Naive thymus-derived CD4-positive, alpha-beta T cell (primary cell): ENCODE measurements at regions of chr3 and their contacts with region 1.

Region 1: DNA sequence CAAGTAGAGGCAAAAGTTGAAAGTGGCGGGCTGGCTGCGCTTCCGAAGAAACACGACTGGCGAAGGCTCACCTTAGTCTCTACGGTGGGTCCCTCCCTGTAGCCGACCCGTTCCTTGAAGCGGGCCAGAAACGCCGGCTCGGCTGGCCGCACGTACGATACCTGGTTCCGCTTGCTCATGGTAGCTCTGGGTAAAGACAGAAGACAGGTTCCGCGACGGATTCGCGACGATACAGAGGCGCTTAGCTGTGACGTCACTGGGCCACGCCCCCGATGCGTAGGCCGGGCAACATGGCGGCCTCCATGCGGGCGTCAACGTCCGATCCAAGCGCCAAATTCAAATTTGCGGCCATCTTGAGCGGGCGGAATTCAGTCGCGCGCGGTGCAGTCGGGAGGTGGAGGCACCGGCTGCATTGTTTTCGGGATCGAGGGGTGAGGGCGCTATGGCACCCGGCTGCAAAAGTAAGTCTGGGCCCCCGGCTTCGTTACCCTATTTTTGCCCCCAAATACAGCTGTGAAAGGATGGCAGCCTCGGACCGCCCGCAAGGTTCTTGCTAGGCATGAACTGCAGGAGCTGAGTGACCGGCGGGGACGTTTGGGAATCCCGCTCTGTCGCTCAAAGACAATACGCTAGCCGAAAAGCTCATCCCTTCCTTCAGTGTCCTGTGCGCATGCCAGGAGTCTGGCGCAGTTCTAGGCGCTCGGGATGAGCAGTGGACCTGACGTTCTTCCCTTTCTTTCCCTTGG is at the starts of genes KIAA1143 and KIF15:
- DNase-seq: peak; percentile 92 to 98 (median 94)
- ATAC-seq: peak; percentile 100
- H3K4me3 ChIP-seq: peak within 1 kb of the TSS; percentile 99
- H3K4me3 Mint-ChIP-seq: peak within 1 kb of the TSS; percentile 86 to 94 (median 90)
- H3K27ac ChIP-seq: peak within 1 kb of the TSS; percentile 82
- H3K27ac Mint-ChIP-seq: peak within 1 kb of the TSS; percentile 80 to 96 (median 92)
- H3K4me1 ChIP-seq: peaks cover 0 to 6% of the 10 kb centered on the region in 2 donors
- H3K4me1 Mint-ChIP-seq: peaks cover 16 to 51% (median 42%) of the 10 kb centered on the region in 7 donors
- H3K27me3 ChIP-seq: no peaks in the 10 kb centered on the region
- H3K27me3 Mint-ChIP-seq: peaks cover 0 to 3% (median 0%) of the 10 kb centered on the region in 5 donors
- total RNA-seq, gene KIAA1143: 17.5 to 44.4 (median 39.8) TPM
- total RNA-seq, gene KIF15: 0.11 to 31.9 (median 0.30) TPM

Region 2: DNA sequence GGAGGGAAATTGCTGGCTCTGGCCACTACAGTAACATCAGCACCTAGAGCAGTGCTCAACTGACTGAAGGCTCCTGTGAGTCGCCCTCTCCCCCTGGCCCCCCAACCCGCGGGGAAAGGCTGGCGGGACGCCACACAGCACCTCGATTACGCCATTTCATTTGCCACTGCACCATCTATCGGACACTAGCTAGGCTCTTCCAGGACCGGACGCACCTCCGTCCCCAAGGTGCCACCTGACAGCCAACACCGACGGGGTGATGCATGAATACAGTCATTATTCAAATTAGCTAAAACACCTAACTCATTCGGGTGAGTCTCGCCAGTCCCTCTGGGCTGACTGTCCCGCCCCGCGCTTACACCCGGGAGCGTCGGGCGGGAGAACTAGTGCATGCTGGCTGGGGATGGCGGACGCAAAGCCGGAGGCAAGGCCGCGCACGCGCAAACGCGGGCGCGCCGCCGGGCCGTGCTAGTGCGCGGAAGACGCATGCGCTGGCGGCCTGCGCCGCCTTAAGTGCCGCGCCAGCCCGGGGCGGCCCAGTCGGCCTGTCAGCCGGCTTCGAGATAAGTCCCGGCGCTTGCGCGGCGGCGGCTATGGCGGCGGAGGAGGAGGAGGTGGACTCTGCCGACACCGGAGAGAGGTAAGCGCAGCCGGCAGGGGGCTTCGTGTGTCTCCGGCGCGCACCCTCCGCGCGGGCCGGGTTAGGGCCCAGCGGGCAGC is 1071.0 kb before region 1 on chr3 and contains the start of gene ABHD5:
- CTCF ChIA-PET with region 1: no interaction called
- POLR2A ChIA-PET with region 1: no interaction called
- intact Hi-C with region 1: loop called in 1 of 2 experiments (anchors 5 kb)
- DNase-seq: peak; percentile 94 to 99 (median 96)
- ATAC-seq: peak; percentile 96
- H3K4me3 ChIP-seq: peak within 1 kb of the TSS; percentile 74
- H3K4me3 Mint-ChIP-seq: peak within 1 kb of the TSS; percentile 91 to 98 (median 94)
- H3K27ac ChIP-seq: peak within 1 kb of the TSS; percentile 85
- H3K27ac Mint-ChIP-seq: peak within 1 kb of the TSS; percentile 90 to 97 (median 92)
- H3K4me1 ChIP-seq: peaks cover 8% of the 10 kb centered on the region in 2 donors
- H3K4me1 Mint-ChIP-seq: peaks cover 11 to 47% (median 37%) of the 10 kb centered on the region in 7 donors
- H3K27me3 ChIP-seq: no peaks in the 10 kb centered on the region
- H3K27me3 Mint-ChIP-seq: peaks cover 0 to 6% (median 0%) of the 10 kb centered on the region in 5 donors
- total RNA-seq, gene ABHD5: 6.1 to 21.0 (median 12.1) TPM

Region 3: DNA sequence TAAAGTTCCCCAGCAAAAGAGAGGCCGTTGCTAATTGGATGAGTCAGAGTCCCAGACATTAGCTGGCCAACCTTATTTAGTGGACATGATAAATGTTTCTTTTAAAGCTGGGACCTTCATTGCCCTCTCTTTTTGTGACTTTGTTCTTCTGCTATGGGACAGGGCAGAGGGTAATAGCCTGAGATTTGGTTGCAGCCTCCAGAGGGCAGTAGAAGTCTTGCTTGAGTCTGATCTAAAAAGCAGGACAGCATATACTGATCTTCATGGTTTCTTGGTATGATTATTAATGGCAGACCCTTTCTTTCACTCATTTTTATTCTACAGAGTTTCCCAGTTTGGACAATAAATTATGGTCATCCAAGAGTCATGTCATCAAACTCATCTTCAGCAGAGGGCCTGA is 231.7 kb before region 1 on chr3:
- CTCF ChIA-PET with region 1: interaction called, 4 read pairs
- POLR2A ChIA-PET with region 1: no interaction called
- intact Hi-C with region 1: loop called in 1 of 2 experiments (anchors 1 kb)
- DNase-seq: peak in 1 of 9 donors; percentile 15
- ATAC-seq: no peak
- H3K4me3 ChIP-seq: no peak overlapping the region
- H3K4me3 Mint-ChIP-seq: no peak overlapping the region
- H3K27ac ChIP-seq: no peak overlapping the region
- H3K27ac Mint-ChIP-seq: no peak overlapping the region
- H3K4me1 ChIP-seq: no peaks in the 10 kb centered on the region
- H3K4me1 Mint-ChIP-seq: peaks cover 0 to 2% (median 0%) of the 10 kb centered on the region in 7 donors
- H3K27me3 ChIP-seq: no peaks in the 10 kb centered on the region
- H3K27me3 Mint-ChIP-seq: peaks cover 9 to 30% (median 15%) of the 10 kb centered on the region in 5 donors

Region 4: GRCh38 chr3:44682182-44682896 is 79.3 kb before region 1 on chr3:
- CTCF ChIA-PET with region 1: no interaction called
- POLR2A ChIA-PET with region 1: no interaction called
- intact Hi-C with region 1: no loop called
- DNase-seq: no peak
- ATAC-seq: no peak
- H3K4me3 ChIP-seq: no peak overlapping the region
- H3K4me3 Mint-ChIP-seq: no peak overlapping the region
- H3K27ac ChIP-seq: no peak overlapping the region
- H3K27ac Mint-ChIP-seq: no peak overlapping the region
- H3K4me1 ChIP-seq: no peaks in the 10 kb centered on the region
- H3K4me1 Mint-ChIP-seq: peaks cover 7 to 22% (median 17%) of the 10 kb centered on the region in 7 donors
- H3K27me3 ChIP-seq: no peaks in the 10 kb centered on the region
- H3K27me3 Mint-ChIP-seq: peaks cover 1 to 25% (median 11%) of the 10 kb centered on the region in 5 donors

Region 5: GRCh38 chr3:44712455-44713075 is 49.0 kb before region 1 on chr3 and contains the start of gene ZNF502:
- CTCF ChIA-PET with region 1: no interaction called
- POLR2A ChIA-PET with region 1: interaction called, 3 read pairs
- intact Hi-C with region 1: loop called in 1 of 2 experiments (anchors 1 kb)
- DNase-seq: peak; percentile 20 to 60 (median 33)
- ATAC-seq: peak; percentile 81
- H3K4me3 ChIP-seq: peak within 1 kb of the TSS; percentile 65
- H3K4me3 Mint-ChIP-seq: peak within 1 kb of the TSS; percentile 49 to 96 (median 91)
- H3K27ac ChIP-seq: peak within 1 kb of the TSS; percentile 44
- H3K27ac Mint-ChIP-seq: peak within 1 kb of the TSS; percentile 4 to 85 (median 75)
- H3K4me1 ChIP-seq: no peaks in the 10 kb centered on the region
- H3K4me1 Mint-ChIP-seq: peaks cover 4 to 25% (median 16%) of the 10 kb centered on the region in 7 donors
- H3K27me3 ChIP-seq: no peaks in the 10 kb centered on the region
- H3K27me3 Mint-ChIP-seq: peaks cover 0 to 35% (median 16%) of the 10 kb centered on the region in 5 donors
- total RNA-seq, gene ZNF502: 1.1 to 6.1 (median 4.1) TPM

Region 6: GRCh38 chr3:44913868-44914468 is 152.4 kb after region 1 on chr3:
- CTCF ChIA-PET with region 1: interaction called, 4 read pairs
- POLR2A ChIA-PET with region 1: interaction called, 4 read pairs
- intact Hi-C with region 1: loop called in 1 of 2 experiments (anchors 1 kb)
- DNase-seq: peak; percentile 27 to 69 (median 53)
- ATAC-seq: peak; percentile 70
- H3K4me3 ChIP-seq: no peak overlapping the region
- H3K4me3 Mint-ChIP-seq: no peak overlapping the region
- H3K27ac ChIP-seq: no peak overlapping the region
- H3K27ac Mint-ChIP-seq: no peak overlapping the region
- H3K4me1 ChIP-seq: no peaks in the 10 kb centered on the region
- H3K4me1 Mint-ChIP-seq: peaks cover 0 to 4% (median 0%) of the 10 kb centered on the region in 7 donors
- H3K27me3 ChIP-seq: no peaks in the 10 kb centered on the region
- H3K27me3 Mint-ChIP-seq: peaks cover 13 to 19% (median 14%) of the 10 kb centered on the region in 5 donors

Region 7: DNA sequence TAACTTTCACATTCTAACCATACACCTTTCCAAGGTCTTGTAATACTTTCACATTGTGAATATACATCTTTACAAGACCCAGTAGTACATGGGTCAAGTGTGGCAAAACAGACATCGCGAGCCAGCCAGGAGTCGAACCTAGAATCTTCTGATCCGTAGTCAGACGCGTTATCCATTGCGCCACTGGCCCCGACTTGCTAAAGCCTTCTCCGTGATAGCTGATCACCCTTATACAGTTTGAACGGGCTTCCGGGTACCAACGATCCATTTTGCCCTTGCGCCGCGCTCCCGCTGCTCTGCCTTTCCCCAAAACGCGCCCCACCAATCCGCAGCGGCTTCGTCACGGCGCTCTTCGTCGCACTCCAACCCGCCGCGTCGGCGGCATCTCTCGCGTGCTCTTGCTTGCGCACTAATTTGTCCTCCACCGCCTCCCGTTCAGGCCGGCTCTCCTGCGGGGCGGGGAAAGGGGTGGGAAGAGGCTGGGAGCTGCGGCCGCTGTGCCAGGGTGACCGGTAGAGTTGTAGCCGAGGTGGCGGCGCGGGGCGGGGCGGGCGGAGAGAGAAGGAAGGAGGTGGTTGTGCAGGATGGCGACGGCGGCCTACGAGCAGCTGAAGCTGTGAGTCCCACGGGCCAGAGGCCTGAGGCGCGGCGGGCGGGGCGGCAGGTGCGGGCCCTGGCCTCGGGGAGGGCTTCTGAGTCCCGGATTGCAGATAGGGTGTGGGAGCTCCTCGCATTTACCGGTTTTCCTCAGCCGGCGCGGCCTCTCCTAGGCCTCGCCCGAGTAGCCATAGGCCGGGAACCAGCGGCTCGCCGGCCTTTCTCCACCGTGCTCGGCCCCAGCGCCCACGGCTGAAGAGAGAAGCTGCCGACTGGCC is 927.5 kb after region 1 on chr3 and contains the start of gene SACM1L:
- CTCF ChIA-PET with region 1: no interaction called
- POLR2A ChIA-PET with region 1: no interaction called
- intact Hi-C with region 1: loop called in 1 of 2 experiments (anchors 5 kb)
- DNase-seq: peak; percentile 84 to 97 (median 95)
- ATAC-seq: peak; percentile 90
- H3K4me3 ChIP-seq: peak within 1 kb of the TSS; percentile 80
- H3K4me3 Mint-ChIP-seq: peak within 1 kb of the TSS; percentile 87 to 98 (median 95)
- H3K27ac ChIP-seq: peak within 1 kb of the TSS; percentile 96
- H3K27ac Mint-ChIP-seq: peak within 1 kb of the TSS; percentile 96 to 100 (median 99)
- H3K4me1 ChIP-seq: peaks cover 38 to 39% of the 10 kb centered on the region in 2 donors
- H3K4me1 Mint-ChIP-seq: peaks cover 40 to 74% (median 67%) of the 10 kb centered on the region in 7 donors
- H3K27me3 ChIP-seq: no peaks in the 10 kb centered on the region
- H3K27me3 Mint-ChIP-seq: peaks cover 0 to 5% (median 0%) of the 10 kb centered on the region in 5 donors
- total RNA-seq, gene SACM1L: 60.8 to 93.8 (median 70.5) TPM